ENCODE measurements at regions of chr1 and their contacts with region 1.

Region 1: GRCh38 chr1:85344256-85344694 is 67.8 kb upstream of the BCL10 start:
- DNase-seq: peak in 1 of 5 donors; percentile 46
- ATAC-seq: peak; percentile 75 to 79 (median 76)
- H3K4me3 ChIP-seq: no peak overlapping the region
- H3K27ac ChIP-seq: peak overlapping the region in 1 of 12 donors; percentile 56
- H3K4me1 ChIP-seq: peaks cover 0 to 33% (median 24%) of the 10 kb centered on the region in 12 donors
- H3K27me3 ChIP-seq: no peaks in the 10 kb centered on the region
- CTCF ChIP-seq: peak in 11 of 12 donors; percentile 21 to 66 (median 52)
- POLR2A ChIP-seq: no peak

Region 2: GRCh38 chr1:85398391-85399064 is 54.3 kb after region 1 on chr1:
- intact Hi-C with region 1: loop called in 2 of 10 experiments (anchors 5 to 10 kb)
- DNase-seq: no peak
- ATAC-seq: peak; percentile 13 to 66 (median 42)
- H3K4me3 ChIP-seq: no peak overlapping the region
- H3K27ac ChIP-seq: peak overlapping the region in 1 of 12 donors; percentile 25
- H3K4me1 ChIP-seq: peaks cover 0 to 26% (median 0%) of the 10 kb centered on the region in 12 donors
- H3K27me3 ChIP-seq: no peaks in the 10 kb centered on the region
- CTCF ChIP-seq: peak; percentile 11 to 52 (median 32)
- POLR2A ChIP-seq: no peak